ENCODE measurements at regions of chr6 and their contacts with region 1.

Region 1: GRCh38 chr6:90621581-90621980 is 34.7 kb upstream of the MAP3K7 start:
- DNase-seq: no peak
- ATAC-seq: no peak
- H3K4me3 ChIP-seq: no peak overlapping the region
- H3K27ac ChIP-seq: no peak overlapping the region
- H3K4me1 ChIP-seq: no peaks in the 10 kb centered on the region
- H3K27me3 ChIP-seq: 0 out of 4 replicates have a peak, but pooled peaks cover 0 to 2% of the 10 kb centered on the region in 2 experiments
- CTCF ChIP-seq: no peak
- EP300 ChIP-seq: no peak
- POLR2A ChIP-seq: no peak
- RAD21 ChIP-seq: no peak

Region 2: DNA sequence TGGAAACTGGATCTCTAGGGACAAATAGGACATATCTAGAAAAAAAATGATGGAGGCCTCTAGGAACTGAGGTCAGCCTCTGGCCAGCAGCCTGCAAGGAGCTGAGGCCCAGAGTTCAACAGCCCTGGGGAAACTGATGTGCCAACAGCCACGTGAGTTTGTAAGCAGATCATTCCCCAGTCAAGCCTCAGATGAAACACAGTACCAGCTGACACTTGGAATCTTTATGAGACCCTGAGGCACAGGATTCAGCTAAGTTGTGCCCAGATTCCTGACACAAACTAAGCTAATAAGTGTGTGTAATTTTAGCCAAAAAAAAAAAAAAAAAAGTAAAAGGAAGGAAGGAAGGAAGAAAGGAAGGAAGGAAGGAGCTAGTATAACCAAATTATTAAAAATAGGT is 1025.1 kb after region 1 on chr6:
- CTCF ChIA-PET with region 1: no interaction called
- POLR2A ChIA-PET with region 1: interaction called, 11 read pairs
- RAD21 ChIA-PET with region 1: no interaction called
- SMC1A ChIA-PET with region 1: no interaction called
- in situ Hi-C with region 1: no loop called
- intact Hi-C with region 1: no loop called
- DNase-seq: no peak
- ATAC-seq: no peak
- H3K4me3 ChIP-seq: no peak overlapping the region
- H3K27ac ChIP-seq: no peak overlapping the region
- H3K4me1 ChIP-seq: no peaks in the 10 kb centered on the region
- H3K27me3 ChIP-seq: no peaks in the 10 kb centered on the region; a peak in 1 of 4 replicates
- CTCF ChIP-seq: no peak
- EP300 ChIP-seq: no peak
- POLR2A ChIP-seq: no peak
- RAD21 ChIP-seq: no peak